Activated naive CD4-positive, alpha-beta T cell treated with anti-CD3 and anti-CD28 coated beads for 36 hours (primary cell): ENCODE measurements at regions of chr3 and their contacts with region 1.

Region 1: DNA sequence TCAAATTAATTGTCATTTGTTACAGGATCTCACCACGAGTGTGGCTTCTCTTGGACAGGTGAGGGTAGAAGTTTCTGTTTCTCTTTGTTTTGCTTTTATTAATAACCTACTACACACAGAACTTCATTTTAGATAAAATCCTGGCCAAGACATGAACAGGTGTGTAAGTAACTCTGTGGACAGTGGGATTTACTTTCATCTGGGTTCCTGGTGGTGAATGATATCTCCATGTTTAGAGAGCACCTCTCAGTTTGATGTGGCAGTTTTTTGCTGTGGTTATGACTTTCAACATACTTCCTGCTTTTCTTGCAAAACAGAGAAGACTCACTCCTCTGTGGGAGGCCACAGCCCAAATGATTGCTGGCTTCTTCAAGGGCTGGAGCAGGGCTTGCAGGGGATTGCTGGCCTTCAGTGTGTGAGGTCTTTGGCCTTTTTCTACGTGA is 71.1 kb upstream of the XCR1 start:
- DNase-seq: peak; percentile 69
- H3K4me3 Mint-ChIP-seq: no peak overlapping the region
- H3K27ac Mint-ChIP-seq: peak overlapping the region; percentile 76
- H3K4me1 Mint-ChIP-seq: peaks cover 31% of the 10 kb centered on the region
- H3K27me3 Mint-ChIP-seq: peaks cover 20% of the 10 kb centered on the region

Region 2: DNA sequence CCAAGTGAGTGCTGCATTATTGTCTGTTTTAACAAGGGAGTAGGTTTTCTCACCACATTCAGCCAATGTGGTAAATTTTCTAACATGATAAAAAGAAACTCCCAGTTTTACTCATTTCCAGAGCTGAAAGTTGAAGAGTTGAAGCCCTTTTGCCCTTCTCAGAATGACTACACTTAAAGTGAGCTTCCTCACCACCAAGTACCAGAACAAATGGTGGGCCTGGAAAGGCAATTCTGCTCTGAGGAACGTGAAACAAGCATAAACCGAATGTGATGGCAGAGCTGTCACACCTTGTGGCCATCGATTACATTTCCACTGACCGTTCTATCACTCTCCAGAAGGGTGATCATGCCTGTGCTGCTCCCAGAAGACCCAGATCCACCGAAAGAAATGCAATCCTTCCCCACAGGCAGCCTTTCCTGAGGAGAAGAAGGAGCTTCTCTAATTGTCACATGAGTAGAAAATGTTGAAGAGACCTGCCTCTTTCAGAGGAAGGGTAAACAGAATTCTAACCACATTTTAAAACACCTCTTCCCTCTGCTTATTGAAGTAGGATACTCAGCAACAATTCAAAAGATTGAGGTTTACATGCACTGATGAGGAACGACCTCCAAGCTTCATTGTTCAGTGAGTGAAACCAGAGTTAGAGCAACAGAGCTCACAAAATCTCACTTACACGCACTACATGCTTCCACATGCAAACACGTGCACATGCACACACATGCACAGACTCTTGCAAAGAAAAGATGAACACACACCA is 233.4 kb before region 1 on chr3:
- CTCF ChIA-PET with region 1: no interaction called
- intact Hi-C with region 1: loop called (anchors 2 kb)
- DNase-seq: peak; percentile 48
- H3K4me3 Mint-ChIP-seq: no peak overlapping the region
- H3K27ac Mint-ChIP-seq: no peak overlapping the region
- H3K4me1 Mint-ChIP-seq: peaks cover 44% of the 10 kb centered on the region
- H3K27me3 Mint-ChIP-seq: peaks cover 53% of the 10 kb centered on the region

Region 3: DNA sequence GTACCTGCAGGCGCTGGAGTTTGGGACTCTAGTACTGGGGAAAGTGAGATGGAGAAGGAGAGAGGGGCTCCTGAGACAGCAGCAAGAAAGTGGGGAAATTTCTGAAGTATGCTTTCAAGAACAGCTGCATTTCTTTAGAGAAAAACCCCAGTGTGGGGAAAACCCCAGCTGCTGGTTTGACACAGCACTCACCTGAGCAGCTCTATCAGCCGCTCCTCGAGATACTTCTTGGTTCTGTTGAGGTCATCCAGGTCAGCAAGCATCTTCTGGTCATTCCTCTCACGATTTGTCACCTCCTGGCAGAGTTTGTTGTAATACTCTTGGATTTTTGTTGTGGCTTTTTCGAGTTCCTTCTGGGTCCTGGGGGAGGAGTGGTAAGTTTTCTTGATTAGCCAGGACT is 136.3 kb before region 1 on chr3:
- CTCF ChIA-PET with region 1: no interaction called
- intact Hi-C with region 1: loop called (anchors 1 kb)
- DNase-seq: peak; percentile 75
- H3K4me3 Mint-ChIP-seq: no peak overlapping the region
- H3K27ac Mint-ChIP-seq: no peak overlapping the region
- H3K4me1 Mint-ChIP-seq: peaks cover 52% of the 10 kb centered on the region
- H3K27me3 Mint-ChIP-seq: no peaks in the 10 kb centered on the region

Region 4: GRCh38 chr3:46065294-46065721 is 33.0 kb before region 1 on chr3:
- CTCF ChIA-PET with region 1: interaction called, 3 read pairs
- intact Hi-C with region 1: loop called (anchors 1 kb)
- DNase-seq: peak; percentile 89
- H3K4me3 Mint-ChIP-seq: no peak overlapping the region
- H3K27ac Mint-ChIP-seq: no peak overlapping the region
- H3K4me1 Mint-ChIP-seq: peaks cover 67% of the 10 kb centered on the region
- H3K27me3 Mint-ChIP-seq: peaks cover 49% of the 10 kb centered on the region

Region 5: GRCh38 chr3:46208167-46208704 is 109.9 kb after region 1 on chr3 and contains the start of gene CCR1:
- CTCF ChIA-PET with region 1: interaction called, 3 read pairs
- intact Hi-C with region 1: loop called (anchors 1 kb)
- DNase-seq: peak; percentile 67
- H3K4me3 Mint-ChIP-seq: no peak within 1 kb of the TSS
- H3K27ac Mint-ChIP-seq: no peak within 1 kb of the TSS
- H3K4me1 Mint-ChIP-seq: peaks cover 15% of the 10 kb centered on the region
- H3K27me3 Mint-ChIP-seq: peaks cover 2% of the 10 kb centered on the region
- total RNA-seq, gene CCR1: not detected

Region 6: GRCh38 chr3:46538803-46539442 is 440.6 kb after region 1 on chr3:
- CTCF ChIA-PET with region 1: no interaction called
- intact Hi-C with region 1: loop called (anchors 2 kb)
- DNase-seq: peak; percentile 90
- H3K4me3 Mint-ChIP-seq: peak overlapping the region; percentile 54
- H3K27ac Mint-ChIP-seq: peak overlapping the region; percentile 78
- H3K4me1 Mint-ChIP-seq: peaks cover 58% of the 10 kb centered on the region
- H3K27me3 Mint-ChIP-seq: no peaks in the 10 kb centered on the region